ENCODE measurements at regions of chr11 and their contacts with region 1.

Region 1: DNA sequence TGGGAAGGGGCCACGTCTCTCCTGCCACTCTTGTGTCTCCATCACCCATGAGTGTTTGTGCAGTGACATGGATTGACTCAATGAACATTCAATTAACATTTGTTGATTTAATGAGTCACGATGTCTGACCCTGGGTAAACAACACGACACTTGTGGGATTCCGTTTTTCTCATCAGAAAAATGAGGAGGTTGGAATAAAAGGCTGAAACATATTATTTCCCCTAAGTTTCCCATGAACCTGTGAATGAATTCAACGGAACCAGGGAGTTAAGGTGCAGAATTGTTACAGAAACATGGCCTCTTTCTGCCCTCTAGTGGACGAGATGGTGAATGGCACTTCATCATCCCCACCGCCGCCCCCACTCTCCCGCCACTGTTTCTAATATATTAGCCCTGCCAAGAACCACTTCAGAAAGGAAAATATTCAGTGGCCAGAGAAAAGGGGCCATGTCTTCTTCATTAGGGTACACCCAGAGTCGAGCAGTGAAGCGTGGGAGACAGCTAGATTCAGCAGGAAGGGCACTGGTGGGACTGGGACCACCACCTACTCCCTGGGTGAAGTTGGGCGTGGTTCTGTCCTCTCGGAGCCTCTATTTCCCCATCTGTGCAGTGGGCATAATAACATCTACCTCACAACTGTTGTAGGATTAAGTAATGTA is 46.3 kb upstream of the SYT13 start:
- DNase-seq: peak; percentile 56
- H3K4me3 ChIP-seq: no peak overlapping the region
- H3K27ac ChIP-seq: no peak overlapping the region
- H3K4me1 ChIP-seq: peaks cover 19% of the 10 kb centered on the region
- CTCF ChIP-seq: peak; percentile 80

Region 2: DNA sequence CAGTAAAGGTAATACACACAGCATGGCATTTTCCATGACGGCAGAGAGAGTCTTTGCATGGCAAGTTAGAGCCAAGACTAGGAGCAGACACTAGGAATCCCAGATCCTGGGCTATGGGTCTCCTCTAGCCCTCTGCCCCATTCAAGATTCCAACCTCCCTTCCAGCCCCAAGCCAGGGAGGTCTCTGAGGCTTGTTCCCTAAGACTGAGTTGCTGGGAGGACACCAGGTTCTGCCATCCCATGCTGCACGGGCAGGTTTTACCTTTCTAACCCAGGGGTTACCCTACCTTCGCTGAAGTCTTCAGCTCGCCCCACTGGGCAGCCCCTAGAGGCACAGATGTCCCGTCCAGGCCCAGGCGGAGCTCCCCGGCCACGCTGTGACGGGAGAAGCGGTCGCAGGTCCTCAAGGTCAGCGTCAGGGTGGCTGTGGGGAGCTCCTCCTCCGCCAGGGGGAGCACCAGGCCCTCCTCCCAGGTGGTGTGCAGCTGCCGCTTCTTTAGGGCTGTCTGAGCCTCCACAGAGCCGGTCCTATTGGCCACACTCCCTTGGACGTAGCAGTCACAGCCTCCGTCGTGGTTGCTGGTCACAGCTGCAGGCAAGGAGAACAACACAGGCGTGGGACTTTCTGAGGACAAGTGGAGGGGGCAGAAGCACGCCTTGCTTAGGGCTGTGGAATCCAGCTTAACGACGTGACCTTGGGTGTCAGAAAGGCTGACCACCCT is 80.1 kb before region 1 on chr11:
- CTCF ChIA-PET with region 1: no interaction called
- POLR2A ChIA-PET with region 1: no interaction called
- intact Hi-C with region 1: loop called (anchors 2 kb)
- DNase-seq: peak; percentile 44
- H3K4me3 ChIP-seq: no peak overlapping the region
- H3K27ac ChIP-seq: no peak overlapping the region
- H3K4me1 ChIP-seq: peaks cover 9% of the 10 kb centered on the region
- CTCF ChIP-seq: peak; percentile 78

Region 3: DNA sequence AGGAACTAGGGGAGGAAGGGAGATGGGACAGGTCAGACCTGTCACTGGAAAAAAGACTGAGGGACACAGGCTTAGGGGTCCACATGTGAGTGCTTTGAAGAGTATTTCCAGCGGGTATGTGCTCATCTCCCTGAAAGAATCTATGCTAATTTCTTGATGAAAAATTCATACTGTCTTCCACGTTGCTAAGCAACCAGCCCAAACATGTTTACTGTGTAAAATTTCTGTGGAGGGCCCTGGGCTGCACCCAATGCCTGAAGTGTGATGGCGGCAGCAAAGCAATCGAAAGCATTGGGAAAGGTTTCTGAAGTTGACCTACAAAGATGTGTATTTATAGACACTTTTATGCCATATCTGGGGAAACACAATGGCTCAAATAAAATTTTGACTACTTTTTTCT is 53.7 kb before region 1 on chr11:
- CTCF ChIA-PET with region 1: no interaction called
- POLR2A ChIA-PET with region 1: no interaction called
- intact Hi-C with region 1: no loop called
- DNase-seq: no peak
- H3K4me3 ChIP-seq: no peak overlapping the region
- H3K27ac ChIP-seq: no peak overlapping the region
- H3K4me1 ChIP-seq: no peaks in the 10 kb centered on the region
- CTCF ChIP-seq: no peak

Region 4: DNA sequence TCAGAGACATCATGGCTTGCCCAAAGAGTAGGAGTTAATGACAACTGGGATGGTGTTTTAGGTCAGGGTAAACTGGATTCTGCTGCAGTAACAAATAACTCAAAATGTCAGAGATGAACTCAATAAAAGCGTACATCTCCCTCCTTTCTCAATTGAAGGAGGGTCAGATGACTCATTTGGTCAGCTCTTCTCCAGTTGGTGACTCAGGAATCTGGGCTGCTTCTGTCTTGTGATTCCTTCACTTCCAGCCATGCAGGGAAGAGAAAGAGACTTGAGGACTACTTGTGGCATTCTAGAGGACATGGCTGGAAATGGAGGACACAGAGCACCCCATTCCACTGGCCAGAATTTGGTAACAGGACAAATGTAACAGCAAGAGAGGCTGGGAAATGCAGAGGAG is 43.0 kb before region 1 on chr11:
- CTCF ChIA-PET with region 1: no interaction called
- POLR2A ChIA-PET with region 1: no interaction called
- intact Hi-C with region 1: loop called (anchors 2 kb)
- DNase-seq: no peak
- H3K4me3 ChIP-seq: no peak overlapping the region
- H3K27ac ChIP-seq: no peak overlapping the region
- H3K4me1 ChIP-seq: no peaks in the 10 kb centered on the region
- CTCF ChIP-seq: no peak